ENCODE measurements at regions of chr17 and their contacts with region 1.

Region 1: GRCh38 chr17:67475236-67475937 is 98.3 kb downstream of the PITPNC1 start:
- DNase-seq: peak; percentile 89

Region 2: DNA sequence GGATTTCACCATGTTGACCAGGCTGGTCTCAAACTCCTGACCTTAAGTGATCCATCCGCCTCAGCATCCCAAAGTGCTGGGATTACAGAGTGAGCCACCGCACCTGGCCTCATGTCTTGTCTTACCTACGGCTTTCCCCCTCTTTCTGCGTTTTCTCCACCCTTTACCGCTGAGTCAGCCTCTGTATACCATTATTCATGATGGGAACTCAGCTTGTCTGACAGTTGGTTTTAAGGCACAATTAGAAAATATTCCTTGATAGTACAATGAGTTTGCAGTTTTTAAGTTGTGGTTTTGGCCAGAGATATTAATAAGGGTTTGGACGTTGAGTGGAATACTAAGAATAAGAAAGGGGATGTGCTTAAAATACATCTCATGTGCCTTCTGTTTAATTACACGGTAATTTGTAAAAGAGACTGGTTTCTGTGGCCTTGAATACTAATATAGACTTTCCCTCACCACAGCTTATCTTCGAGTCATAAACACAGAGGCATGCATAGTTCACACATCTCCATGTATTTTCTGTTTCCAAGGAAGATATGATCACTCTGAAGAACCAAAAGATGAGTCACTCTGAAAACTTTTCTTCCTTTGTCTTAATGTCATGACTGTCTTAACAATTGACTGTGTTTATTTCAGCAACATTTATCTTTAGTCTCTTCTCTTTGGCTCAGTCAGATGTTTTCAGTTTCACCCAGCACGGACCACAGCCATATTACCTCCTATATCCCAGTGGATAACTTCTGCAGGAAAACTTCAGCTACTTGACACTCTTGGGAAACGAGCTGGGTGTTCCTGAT is 43.9 kb before region 1 on chr17:
- intact Hi-C with region 1: loop called (anchors 5 kb)
- DNase-seq: no peak

Region 3: DNA sequence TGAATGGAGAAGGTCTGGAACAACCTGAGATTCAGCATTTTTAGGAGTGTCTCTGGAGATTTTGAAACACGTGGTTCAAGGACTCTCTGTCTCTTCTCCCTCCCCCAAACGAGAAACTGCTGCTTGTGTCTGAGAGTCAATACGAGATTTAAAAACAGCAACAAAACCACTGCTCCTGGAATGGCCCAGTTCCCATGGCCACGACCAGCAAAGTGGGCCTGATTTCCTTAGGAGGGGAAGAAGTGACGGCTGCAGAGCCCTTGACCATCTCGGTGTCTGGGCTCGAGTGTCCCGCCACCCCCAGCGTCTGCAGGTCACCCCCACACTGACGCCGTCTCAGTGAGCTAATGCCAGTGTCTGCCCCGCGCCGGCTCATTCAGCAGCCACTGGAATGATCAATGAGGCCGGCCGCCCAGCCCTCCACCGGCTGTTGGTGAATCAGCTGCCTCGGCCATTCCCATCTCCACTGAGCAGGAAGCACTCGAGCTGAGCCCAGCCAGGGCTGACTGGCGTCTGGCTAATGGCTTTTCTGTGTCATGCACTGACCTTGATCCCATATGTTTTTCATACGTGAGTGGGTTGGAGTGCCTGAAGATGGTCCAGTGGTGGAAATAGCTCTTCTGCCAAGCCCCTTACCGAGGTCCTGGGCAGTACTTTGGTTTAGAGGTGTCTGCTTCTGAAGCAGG is 53.5 kb after region 1 on chr17:
- intact Hi-C with region 1: no loop called
- DNase-seq: peak; percentile 80

Region 4: DNA sequence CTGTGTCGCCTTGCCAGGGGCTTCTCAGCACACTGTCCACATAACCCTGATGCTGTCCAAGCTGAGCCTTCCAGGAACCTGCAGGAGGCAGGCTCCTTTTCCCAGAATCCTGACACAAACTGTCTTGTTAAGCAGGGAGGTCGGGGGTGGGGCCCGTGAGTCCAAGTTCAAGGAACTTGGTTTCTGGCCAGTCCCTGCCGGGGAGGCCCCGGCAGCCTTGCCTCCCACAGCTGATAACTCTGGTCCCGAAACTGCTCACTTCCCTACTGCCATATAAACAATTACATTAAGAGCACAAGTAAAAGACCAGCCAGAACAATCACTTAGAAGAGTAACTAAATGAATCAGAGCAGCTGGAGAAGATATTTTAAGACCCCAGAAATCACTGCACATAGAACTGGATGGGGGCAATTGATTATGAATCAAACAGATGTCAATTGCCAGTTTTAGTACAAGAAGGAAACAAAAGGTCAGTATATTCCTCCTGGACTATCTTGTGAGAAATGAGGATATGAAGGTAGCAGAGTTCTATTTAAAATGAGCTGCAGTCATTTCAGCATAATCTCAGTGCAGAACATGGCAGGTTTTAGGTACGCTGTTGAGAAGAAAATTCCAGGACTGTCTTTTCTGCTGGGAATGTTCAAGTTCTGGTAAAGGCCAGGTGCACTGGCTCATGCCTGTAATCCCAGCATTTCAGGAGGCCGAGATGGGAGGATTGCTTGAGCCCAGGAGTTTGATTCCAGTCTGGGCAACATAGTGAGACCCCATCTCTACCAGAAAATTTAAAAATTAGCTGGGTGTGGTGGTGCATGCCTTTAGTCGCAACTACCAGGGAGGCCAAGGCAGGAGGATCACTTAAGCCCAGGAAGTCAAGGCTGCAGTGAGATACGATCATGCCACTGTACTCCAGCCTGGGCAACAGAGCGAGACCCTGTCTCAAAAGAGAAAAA is 71.5 kb after region 1 on chr17:
- intact Hi-C with region 1: loop called (anchors 5 kb)
- DNase-seq: no peak

Region 5: GRCh38 chr17:67629971-67630320 is 154.6 kb after region 1 on chr17:
- intact Hi-C with region 1: loop called (anchors 2 kb)
- DNase-seq: no peak

Region 6: GRCh38 chr17:67689534-67690177 is 214.3 kb after region 1 on chr17:
- intact Hi-C with region 1: loop called (anchors 10 kb)
- DNase-seq: no peak